Activated naive CD4-positive, alpha-beta T cell treated with anti-CD3 and anti-CD28 coated beads, Interleukin-2, amount 10 ng/mL, durations not matched to agents 7 days and 5 days (primary cell): ENCODE measurements at regions of chr1 and their contacts with region 1.

Region 1: GRCh38 chr1:52127181-52128180 is 14.4 kb upstream of the ZFYVE9 start:
- DNase-seq: peak; percentile 30
- H3K4me3 Mint-ChIP-seq: no peak overlapping the region
- H3K27ac Mint-ChIP-seq: no peak overlapping the region
- H3K4me1 Mint-ChIP-seq: no peaks in the 10 kb centered on the region
- H3K27me3 Mint-ChIP-seq: peaks cover 25% of the 10 kb centered on the region

Region 2: GRCh38 chr1:52296345-52296744 is 168.9 kb after region 1 on chr1:
- CTCF ChIA-PET with region 1: interaction called, 11 read pairs
- DNase-seq: no peak
- H3K4me3 Mint-ChIP-seq: no peak overlapping the region
- H3K27ac Mint-ChIP-seq: no peak overlapping the region
- H3K4me1 Mint-ChIP-seq: no peaks in the 10 kb centered on the region
- H3K27me3 Mint-ChIP-seq: no peaks in the 10 kb centered on the region